ENCODE measurements at regions of chr10 and their contacts with region 1.

Region 1: DNA sequence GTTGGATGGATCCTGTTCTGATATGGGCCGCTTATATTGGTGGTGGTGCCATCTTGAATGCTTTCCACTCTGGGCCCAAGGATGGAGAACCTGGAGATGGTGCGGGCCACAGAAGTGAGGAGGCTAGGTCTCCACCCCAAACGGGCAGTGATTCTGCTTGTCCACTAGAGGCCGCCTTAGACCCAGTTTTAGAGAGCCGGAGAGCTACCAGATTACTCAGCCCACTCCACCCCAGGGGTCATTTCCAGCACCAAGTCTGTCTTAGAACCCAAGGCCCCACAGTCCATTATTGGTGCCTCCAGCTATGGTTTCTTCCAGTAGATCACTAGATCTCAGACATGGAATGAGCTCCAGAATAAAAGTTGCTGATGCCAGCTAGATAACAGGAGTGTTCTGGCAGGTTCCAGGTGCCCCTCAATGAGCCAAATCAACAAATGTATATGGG is 11.8 kb upstream of the CAMK2G start:
- DNase-seq: peak; percentile 82
- H3K4me3 Mint-ChIP-seq: no peak overlapping the region
- H3K27ac Mint-ChIP-seq: no peak overlapping the region
- H3K4me1 Mint-ChIP-seq: no peaks in the 10 kb centered on the region
- H3K27me3 Mint-ChIP-seq: no peaks in the 10 kb centered on the region

Region 2: DNA sequence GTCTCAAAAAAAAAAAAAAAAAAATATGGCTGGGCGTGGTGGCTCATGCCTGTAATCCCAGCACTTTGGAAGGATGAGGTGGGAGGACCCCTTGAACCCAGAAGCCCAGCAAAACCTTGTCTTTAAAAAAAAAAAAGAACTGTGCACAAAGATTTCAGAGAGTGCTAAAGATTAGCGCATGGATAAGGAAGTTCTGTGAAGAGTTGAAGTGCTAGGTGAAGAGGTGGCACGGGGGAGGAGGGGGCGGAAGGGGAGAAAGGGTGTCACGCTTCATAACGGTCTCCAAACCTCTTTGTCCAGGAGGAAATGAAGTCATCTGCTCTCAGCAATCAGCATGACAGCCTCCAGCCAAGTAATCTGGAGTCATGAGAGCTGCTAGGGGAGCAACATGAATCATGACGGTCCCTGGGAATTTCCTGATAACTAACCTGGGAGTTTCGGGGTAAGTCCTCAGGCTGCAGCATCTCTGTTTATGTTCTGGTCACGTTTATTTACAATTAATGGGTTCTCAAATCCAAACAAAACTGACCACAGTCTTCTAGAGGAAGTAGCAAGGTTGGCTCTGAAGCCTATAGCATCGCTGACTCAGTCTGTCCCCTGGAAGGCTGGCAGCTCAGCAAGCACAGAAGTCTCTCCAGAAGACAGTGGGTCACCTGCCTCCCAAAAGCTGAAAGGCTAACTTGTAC is 22.9 kb after region 1 on chr10:
- CTCF ChIA-PET with region 1: interaction called, 8 read pairs
- intact Hi-C with region 1: loop called (anchors 2 kb)
- DNase-seq: peak; percentile 86
- H3K4me3 Mint-ChIP-seq: peak overlapping the region; percentile 20
- H3K27ac Mint-ChIP-seq: peak overlapping the region; percentile 7
- H3K4me1 Mint-ChIP-seq: peaks cover 34% of the 10 kb centered on the region
- H3K27me3 Mint-ChIP-seq: peaks cover 38% of the 10 kb centered on the region

Region 3: GRCh38 chr10:73940634-73941221 is 54.6 kb after region 1 on chr10:
- CTCF ChIA-PET with region 1: interaction called, 396 read pairs
- intact Hi-C with region 1: loop called (anchors 1 kb)
- DNase-seq: peak; percentile 87
- H3K4me3 Mint-ChIP-seq: no peak overlapping the region
- H3K27ac Mint-ChIP-seq: no peak overlapping the region
- H3K4me1 Mint-ChIP-seq: peaks cover 5% of the 10 kb centered on the region
- H3K27me3 Mint-ChIP-seq: no peaks in the 10 kb centered on the region

Region 4: DNA sequence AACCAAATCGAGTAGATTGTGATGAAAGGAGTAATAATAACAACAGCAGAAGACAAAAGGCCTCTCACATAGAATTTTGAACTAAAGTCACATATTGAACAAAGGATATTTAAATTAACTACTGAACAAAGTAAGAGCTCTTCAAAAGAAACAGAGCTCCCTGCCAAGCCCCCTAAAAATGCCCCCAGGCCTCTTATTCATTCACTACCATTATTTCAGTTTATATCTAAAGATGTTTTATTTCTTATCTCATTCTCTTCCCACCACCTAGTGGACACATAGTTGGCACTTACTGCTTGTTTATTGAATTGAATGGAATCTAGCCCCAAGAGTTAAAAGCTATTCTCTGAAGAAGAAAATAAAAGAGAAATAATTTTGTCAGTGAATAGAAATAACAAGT is 149.2 kb after region 1 on chr10:
- CTCF ChIA-PET with region 1: interaction called, 5 read pairs
- intact Hi-C with region 1: loop called (anchors 2 kb)
- DNase-seq: no peak
- H3K4me3 Mint-ChIP-seq: no peak overlapping the region
- H3K27ac Mint-ChIP-seq: no peak overlapping the region
- H3K4me1 Mint-ChIP-seq: peaks cover 30% of the 10 kb centered on the region
- H3K27me3 Mint-ChIP-seq: no peaks in the 10 kb centered on the region

Region 5: DNA sequence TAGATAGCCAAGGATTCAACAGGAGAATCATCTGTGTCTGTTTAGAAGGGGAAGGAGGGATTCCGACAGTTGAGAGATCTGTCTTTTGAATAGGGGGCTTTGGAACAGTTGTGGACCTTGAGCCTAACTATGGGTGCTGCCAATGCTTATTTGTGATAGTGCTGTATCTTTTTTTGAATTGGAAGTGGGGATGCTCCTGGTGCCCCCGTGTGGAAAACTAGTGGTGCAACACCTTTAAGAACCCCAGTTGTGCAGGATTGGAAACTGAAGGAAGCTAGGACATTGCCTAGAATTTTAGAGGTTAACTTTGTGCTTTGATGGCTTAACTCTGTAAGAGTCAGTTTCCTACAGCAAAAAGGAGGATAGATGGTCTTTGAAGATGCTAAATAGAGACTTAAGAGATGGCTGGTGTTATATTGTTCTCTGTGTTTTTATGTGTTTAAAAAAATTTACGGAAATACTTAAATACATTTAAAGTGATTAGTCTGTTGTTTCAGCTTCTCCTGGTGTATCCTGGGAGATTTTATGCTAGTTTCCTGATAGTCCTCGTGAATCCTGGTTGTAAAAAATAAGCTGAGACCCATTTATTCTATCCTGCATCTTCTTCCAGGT is 195.2 kb after region 1 on chr10:
- CTCF ChIA-PET with region 1: interaction called, 48 read pairs
- intact Hi-C with region 1: loop called (anchors 1 kb)
- DNase-seq: peak; percentile 56
- H3K4me3 Mint-ChIP-seq: no peak overlapping the region
- H3K27ac Mint-ChIP-seq: no peak overlapping the region
- H3K4me1 Mint-ChIP-seq: peaks cover 23% of the 10 kb centered on the region
- H3K27me3 Mint-ChIP-seq: no peaks in the 10 kb centered on the region

Region 6: GRCh38 chr10:74234569-74234968 is 348.5 kb after region 1 on chr10:
- CTCF ChIA-PET with region 1: no interaction called
- intact Hi-C with region 1: loop called (anchors 5 kb)
- DNase-seq: no peak
- H3K4me3 Mint-ChIP-seq: no peak overlapping the region
- H3K27ac Mint-ChIP-seq: no peak overlapping the region
- H3K4me1 Mint-ChIP-seq: no peaks in the 10 kb centered on the region
- H3K27me3 Mint-ChIP-seq: no peaks in the 10 kb centered on the region